ENCODE measurements at regions of chr12 and their contacts with region 1.

Region 1: GRCh38 chr12:538731-539539 is 79.2 kb downstream of the B4GALNT3 start:
- DNase-seq: no peak
- H3K4me3 ChIP-seq: no peak overlapping the region
- H3K27ac ChIP-seq: no peak overlapping the region
- H3K4me1 ChIP-seq: peaks cover 0 to 20% (median 9%) of the 10 kb centered on the region in 4 experiments; a peak in 5 of 7 replicates
- H3K27me3 ChIP-seq: no peaks in the 10 kb centered on the region
- CTCF ChIP-seq: no peak
- EP300 ChIP-seq: no peak
- POLR2A ChIP-seq: no peak
- RAD21 ChIP-seq: no peak

Region 2: GRCh38 chr12:278046-278445 is 260.9 kb before region 1 on chr12:
- CTCF ChIA-PET with region 1: no interaction called
- POLR2A ChIA-PET with region 1: no interaction called
- DNase-seq: no peak
- H3K4me3 ChIP-seq: no peak overlapping the region
- H3K27ac ChIP-seq: no peak overlapping the region
- H3K4me1 ChIP-seq: no peaks in the 10 kb centered on the region
- H3K27me3 ChIP-seq: no peaks in the 10 kb centered on the region
- CTCF ChIP-seq: no peak
- EP300 ChIP-seq: no peak
- POLR2A ChIP-seq: no peak
- RAD21 ChIP-seq: no peak

Region 3: GRCh38 chr12:459430-460258 is 79.3 kb before region 1 on chr12 and contains the start of gene B4GALNT3:
- CTCF ChIA-PET with region 1: interaction called, 163 read pairs
- POLR2A ChIA-PET with region 1: interaction called, 4 read pairs
- DNase-seq: peak in 1 of 2 experiments; percentile 82
- H3K4me3 ChIP-seq: peak within 1 kb of the TSS; percentile 61 to 72 (median 62)
- H3K27ac ChIP-seq: no peak within 1 kb of the TSS
- H3K4me1 ChIP-seq: peaks cover 0 to 3% (median 1%) of the 10 kb centered on the region in 4 experiments; a peak in 3 of 7 replicates
- H3K27me3 ChIP-seq: peaks cover 0 to 30% (median 16%) of the 10 kb centered on the region in 4 experiments; a peak in 6 of 7 replicates
- CTCF ChIP-seq: no peak
- EP300 ChIP-seq: no peak
- POLR2A ChIP-seq: no peak
- RAD21 ChIP-seq: no peak
- total RNA-seq, gene B4GALNT3: 20.3 and 20.4 TPM in 2 replicates

Region 4: GRCh38 chr12:464484-465267 is 74.3 kb before region 1 on chr12:
- CTCF ChIA-PET with region 1: interaction called, 163 read pairs
- POLR2A ChIA-PET with region 1: no interaction called
- DNase-seq: no peak
- H3K4me3 ChIP-seq: no peak overlapping the region
- H3K27ac ChIP-seq: no peak overlapping the region
- H3K4me1 ChIP-seq: peaks cover 0 to 4% (median 0%) of the 10 kb centered on the region in 4 experiments; a peak in 2 of 7 replicates
- H3K27me3 ChIP-seq: peaks cover 0 to 20% (median 8%) of the 10 kb centered on the region in 4 experiments; a peak in 5 of 7 replicates
- CTCF ChIP-seq: no peak
- EP300 ChIP-seq: no peak
- POLR2A ChIP-seq: no peak
- RAD21 ChIP-seq: no peak

Measured in H1 (cell line).